ENCODE measurements at regions of chr5 and their contacts with region 1.

Region 1: GRCh38 chr5:113022661-113023060 is 46.1 kb downstream of the DCP2 start:
- DNase-seq: peak; percentile 26
- H3K4me3 Mint-ChIP-seq: peak overlapping the region; percentile 24
- H3K27ac Mint-ChIP-seq: peak overlapping the region; percentile 42
- H3K4me1 Mint-ChIP-seq: peaks cover 63% of the 10 kb centered on the region
- H3K27me3 Mint-ChIP-seq: no peaks in the 10 kb centered on the region

Region 2: DNA sequence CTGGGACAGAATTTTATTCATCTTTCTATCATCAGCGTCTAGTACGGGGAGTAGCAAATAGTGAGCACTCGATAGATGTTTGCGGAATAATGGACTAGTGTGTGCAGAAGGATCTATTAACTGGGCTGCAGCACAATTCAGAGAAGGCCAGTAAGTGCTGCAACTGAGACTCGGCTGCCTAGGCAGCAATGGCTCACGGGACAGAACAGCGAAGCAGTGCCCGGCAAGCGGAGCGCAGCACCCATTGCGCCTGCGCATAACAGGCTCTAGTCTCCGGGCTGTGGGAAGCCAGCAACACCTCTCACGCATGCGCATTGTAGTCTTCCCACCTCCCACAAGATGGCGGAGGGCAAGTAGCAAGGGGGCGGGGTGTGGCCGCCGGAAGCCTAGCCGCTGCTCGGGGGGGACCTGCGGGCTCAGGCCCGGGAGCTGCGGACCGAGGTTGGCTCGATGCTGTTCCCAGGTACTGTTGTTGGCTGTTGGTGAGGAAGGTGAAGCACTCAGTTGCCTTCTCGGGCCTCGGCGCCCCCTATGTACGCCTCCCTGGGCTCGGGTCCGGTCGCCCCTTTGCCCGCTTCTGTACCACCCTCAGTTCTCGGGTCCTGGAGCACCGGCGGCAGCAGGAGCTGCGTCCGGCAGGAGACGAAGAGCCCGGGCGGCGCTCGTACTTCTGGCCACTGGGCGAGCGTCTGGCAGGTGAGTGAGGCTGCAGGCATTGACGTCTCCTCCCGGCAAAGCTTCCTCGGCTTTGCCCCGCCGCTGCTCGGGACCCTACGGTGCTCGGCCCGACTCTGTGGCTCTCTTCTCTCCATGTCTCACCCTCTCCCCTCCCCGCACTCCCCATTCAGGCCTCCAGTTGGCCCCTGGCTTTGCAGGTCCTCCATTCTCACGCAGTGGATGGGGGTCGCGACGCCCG is 315.2 kb before region 1 on chr5:
- intact Hi-C with region 1: no loop called
- DNase-seq: peak; percentile 98
- H3K4me3 Mint-ChIP-seq: peak overlapping the region; percentile 93
- H3K27ac Mint-ChIP-seq: peak overlapping the region; percentile 71
- H3K4me1 Mint-ChIP-seq: peaks cover 35% of the 10 kb centered on the region
- H3K27me3 Mint-ChIP-seq: peaks cover 3% of the 10 kb centered on the region

Region 3: GRCh38 chr5:112895682-112896081 is 127.0 kb before region 1 on chr5:
- intact Hi-C with region 1: no loop called
- DNase-seq: no peak
- H3K4me3 Mint-ChIP-seq: no peak overlapping the region
- H3K27ac Mint-ChIP-seq: no peak overlapping the region
- H3K4me1 Mint-ChIP-seq: peaks cover 7% of the 10 kb centered on the region
- H3K27me3 Mint-ChIP-seq: no peaks in the 10 kb centered on the region

Region 4: GRCh38 chr5:112958093-112959088 is 64.3 kb before region 1 on chr5:
- intact Hi-C with region 1: loop called (anchors 5 kb)
- DNase-seq: no peak
- H3K4me3 Mint-ChIP-seq: no peak overlapping the region
- H3K27ac Mint-ChIP-seq: no peak overlapping the region
- H3K4me1 Mint-ChIP-seq: peaks cover 39% of the 10 kb centered on the region
- H3K27me3 Mint-ChIP-seq: no peaks in the 10 kb centered on the region

Region 5: DNA sequence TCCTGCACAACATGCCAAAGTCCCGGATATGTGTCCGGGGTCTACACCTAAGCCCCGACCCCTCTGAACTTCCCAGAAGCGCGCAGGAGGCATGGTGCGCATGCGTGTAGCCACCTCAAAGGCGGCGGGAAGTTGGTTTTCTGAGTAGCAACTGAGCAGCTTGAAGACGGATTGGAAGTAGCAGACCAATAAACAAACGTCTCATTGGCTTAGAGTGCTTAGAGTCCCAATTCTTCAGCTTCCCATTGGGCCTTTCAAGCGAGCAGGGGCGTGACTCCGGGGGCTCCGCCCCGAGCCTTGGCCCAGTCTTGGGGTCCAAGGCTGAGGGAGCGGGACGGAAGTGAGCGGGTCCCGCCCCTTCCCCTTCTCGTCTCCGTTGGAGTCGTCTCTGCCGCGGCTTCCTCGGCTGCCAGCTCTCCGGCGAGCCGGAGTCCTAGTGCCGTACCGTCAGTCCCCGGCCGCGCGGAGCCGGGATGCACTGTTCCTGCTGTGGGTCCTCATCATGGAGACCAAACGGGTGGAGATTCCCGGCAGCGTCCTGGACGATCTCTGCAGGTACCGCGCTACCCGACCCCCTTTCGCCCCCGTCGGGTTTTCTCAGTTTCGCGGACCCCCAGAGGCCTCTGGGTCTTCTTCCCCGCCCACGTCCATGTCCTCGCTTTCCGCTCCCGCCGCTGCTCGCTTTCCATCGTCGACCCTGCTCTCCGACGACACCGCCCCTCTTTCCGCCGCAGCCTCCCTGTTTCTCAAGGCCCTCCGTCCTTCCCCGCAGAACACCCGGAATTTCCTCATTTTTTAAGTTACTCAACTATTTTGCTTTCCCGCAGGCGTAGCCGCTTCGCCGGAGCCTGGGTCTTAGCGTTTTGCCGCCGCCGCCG is 46.0 kb before region 1 on chr5 and contains the start of gene DCP2:
- intact Hi-C with region 1: loop called (anchors 2 kb)
- DNase-seq: peak; percentile 96
- H3K4me3 Mint-ChIP-seq: peak within 1 kb of the TSS; percentile 99
- H3K27ac Mint-ChIP-seq: peak within 1 kb of the TSS; percentile 95
- H3K4me1 Mint-ChIP-seq: peaks cover 39% of the 10 kb centered on the region
- H3K27me3 Mint-ChIP-seq: no peaks in the 10 kb centered on the region
- total RNA-seq, gene DCP2: 81.6 and 84.1 TPM in 2 replicates

Region 6: GRCh38 chr5:113050721-113051382 is 28.2 kb after region 1 on chr5:
- intact Hi-C with region 1: loop called (anchors 2 kb)
- DNase-seq: no peak
- H3K4me3 Mint-ChIP-seq: no peak overlapping the region
- H3K27ac Mint-ChIP-seq: peak overlapping the region; percentile 42
- H3K4me1 Mint-ChIP-seq: peaks cover 11% of the 10 kb centered on the region
- H3K27me3 Mint-ChIP-seq: no peaks in the 10 kb centered on the region

Region 7: DNA sequence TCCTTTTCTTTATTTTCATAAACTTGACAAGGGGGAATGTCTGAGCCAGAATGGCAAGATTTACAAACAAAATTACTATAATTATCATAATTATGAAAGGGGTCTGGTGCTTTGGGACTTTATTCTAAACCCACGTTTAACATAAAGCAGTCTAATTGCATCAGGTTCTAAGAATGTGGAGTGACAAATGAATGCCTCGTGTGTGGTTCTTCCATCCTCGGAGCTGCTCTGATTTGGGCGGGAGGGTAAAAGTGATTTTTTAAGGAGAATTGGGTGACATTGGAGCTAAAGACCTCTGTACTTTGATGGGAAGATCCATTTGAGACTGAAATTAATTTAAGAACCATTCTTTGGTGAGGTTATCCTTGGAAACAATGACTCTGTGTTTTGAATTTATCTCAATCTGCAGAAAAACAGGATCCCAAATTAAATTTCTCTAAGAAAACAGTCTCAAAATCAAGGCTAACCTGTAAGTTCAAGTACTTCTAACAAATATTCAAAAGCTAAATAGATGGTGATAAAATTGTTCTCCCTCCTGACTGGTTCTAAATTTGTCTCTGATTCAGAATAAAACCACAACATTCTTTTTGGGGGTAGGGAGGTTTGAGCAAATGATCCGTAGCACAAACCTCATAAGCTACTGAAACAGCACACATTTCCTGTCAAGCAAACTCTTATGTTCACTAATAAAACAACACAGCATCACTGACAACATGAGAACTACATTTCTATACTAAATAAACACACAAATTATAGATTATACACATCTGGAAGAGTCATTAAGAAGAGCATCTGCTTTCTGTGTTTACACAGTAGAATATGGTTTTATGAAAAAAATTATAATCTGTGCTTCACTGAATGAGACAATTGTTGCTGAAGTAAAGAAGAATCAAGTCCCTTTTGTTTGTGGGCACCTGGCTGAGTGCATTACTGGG is 39.5 kb after region 1 on chr5:
- intact Hi-C with region 1: loop called (anchors 2 kb)
- DNase-seq: no peak
- H3K4me3 Mint-ChIP-seq: peak overlapping the region; percentile 28
- H3K27ac Mint-ChIP-seq: peak overlapping the region; percentile 47
- H3K4me1 Mint-ChIP-seq: peaks cover 42% of the 10 kb centered on the region
- H3K27me3 Mint-ChIP-seq: peaks cover 3% of the 10 kb centered on the region

Region 8: GRCh38 chr5:113281194-113281593 is 258.5 kb after region 1 on chr5:
- intact Hi-C with region 1: loop called (anchors 2 kb)
- DNase-seq: no peak
- H3K4me3 Mint-ChIP-seq: no peak overlapping the region
- H3K27ac Mint-ChIP-seq: no peak overlapping the region
- H3K4me1 Mint-ChIP-seq: peaks cover 28% of the 10 kb centered on the region
- H3K27me3 Mint-ChIP-seq: peaks cover 13% of the 10 kb centered on the region